Psoas muscle (tissue), 8 donors: ENCODE measurements at regions of chr7 and their contacts with region 1.

Region 1: DNA sequence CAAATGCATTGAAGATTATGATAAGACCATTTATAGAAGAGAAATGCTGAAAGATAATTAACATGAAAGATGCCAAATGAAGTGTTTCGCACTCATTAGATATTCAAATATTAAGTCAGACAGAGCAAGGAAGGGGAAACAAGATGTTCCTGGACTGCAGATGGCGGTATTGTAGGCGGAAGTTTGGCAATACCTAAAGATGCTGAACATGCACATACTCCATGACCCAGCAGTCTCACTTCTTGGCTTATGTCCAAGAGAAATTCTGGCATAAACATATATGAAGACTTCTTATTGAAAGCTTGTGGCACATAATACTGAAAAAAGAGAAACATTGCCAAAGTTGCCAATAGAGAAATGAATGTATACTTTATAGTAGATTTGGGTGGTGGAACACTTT is 325.4 kb upstream of the SEMA3C start:
- DNase-seq: no peak
- ATAC-seq: no peak
- H3K4me3 ChIP-seq: no peak overlapping the region
- H3K27ac ChIP-seq: no peak overlapping the region
- H3K4me1 ChIP-seq: no peaks in the 10 kb centered on the region
- H3K27me3 ChIP-seq: no peaks in the 10 kb centered on the region
- CTCF ChIP-seq: no peak

Region 2: GRCh38 chr7:81186691-81187090 is 57.5 kb before region 1 on chr7:
- intact Hi-C with region 1: loop called in 1 of 2 experiments (anchors 1 kb)
- DNase-seq: no peak
- ATAC-seq: no peak
- H3K4me3 ChIP-seq: no peak overlapping the region
- H3K27ac ChIP-seq: no peak overlapping the region
- H3K4me1 ChIP-seq: peaks cover 6% of the 10 kb centered on the region
- H3K27me3 ChIP-seq: no peaks in the 10 kb centered on the region
- CTCF ChIP-seq: no peak

Region 3: GRCh38 chr7:81608748-81609382 is 364.6 kb after region 1 on chr7:
- intact Hi-C with region 1: no loop called
- DNase-seq: no peak
- ATAC-seq: no peak
- H3K4me3 ChIP-seq: no peak overlapping the region
- H3K27ac ChIP-seq: no peak overlapping the region
- H3K4me1 ChIP-seq: no peaks in the 10 kb centered on the region
- H3K27me3 ChIP-seq: no peaks in the 10 kb centered on the region
- CTCF ChIP-seq: no peak